BJ (cell line): ENCODE measurements at regions of chr7 and their contacts with region 1.

Region 1: GRCh38 chr7:80134536-80135320 is at the start of gene GNAI1:
- DNase-seq: no peak
- H3K4me3 ChIP-seq: peak within 1 kb of the TSS; percentile 95
- H3K27me3 ChIP-seq: no peaks in the 10 kb centered on the region
- CTCF ChIP-seq: peak; percentile 44
- polyA plus RNA-seq, gene GNAI1: 19.4 and 51.6 TPM in 2 replicates

Region 2: DNA sequence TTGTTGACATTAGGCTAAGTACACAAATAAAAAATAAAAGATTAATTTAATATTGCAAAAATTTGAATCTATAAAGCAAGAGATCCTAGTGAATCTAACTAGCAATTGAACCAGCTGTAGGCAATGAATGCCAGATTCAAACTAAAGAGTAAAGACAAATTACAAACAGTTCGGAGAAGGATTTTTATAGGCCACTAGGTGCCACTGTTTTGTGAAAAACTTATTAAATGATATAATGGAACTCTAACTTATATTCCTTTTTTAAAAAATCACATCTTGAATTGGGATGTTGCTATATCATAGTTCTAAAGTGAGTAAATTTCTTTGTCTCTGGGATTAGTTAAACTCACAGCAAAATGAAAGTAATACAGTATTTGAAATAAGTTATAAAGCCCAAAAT is 39.2 kb before region 1 on chr7:
- CTCF ChIA-PET with region 1: interaction called, 15 read pairs
- POLR2A ChIA-PET with region 1: no interaction called
- DNase-seq: no peak
- H3K4me3 ChIP-seq: no peak overlapping the region
- H3K27me3 ChIP-seq: no peaks in the 10 kb centered on the region
- CTCF ChIP-seq: peak; percentile 34; the same call in 1 of the 2 replicates

Region 3: DNA sequence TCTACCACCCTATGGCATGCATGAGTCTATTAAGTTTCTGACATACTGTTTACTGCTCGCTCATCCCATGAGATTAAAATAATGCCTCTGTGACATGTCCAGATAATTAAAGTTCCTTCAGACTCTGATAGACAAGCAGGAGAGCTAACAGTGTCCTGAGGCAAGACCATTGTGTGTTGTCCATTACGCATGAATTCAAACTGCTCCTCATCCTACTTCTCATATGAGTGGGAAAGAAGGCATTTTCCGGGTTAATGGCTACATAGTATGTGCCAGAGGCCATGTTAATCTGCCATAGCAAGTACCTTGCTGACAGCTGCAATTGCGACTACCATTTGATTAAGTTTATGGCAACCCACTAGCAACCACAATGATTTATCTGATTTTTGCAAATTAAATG is 113.2 kb after region 1 on chr7:
- CTCF ChIA-PET with region 1: interaction called, 4 read pairs
- POLR2A ChIA-PET with region 1: interaction called, 18 read pairs
- DNase-seq: no peak
- H3K4me3 ChIP-seq: no peak overlapping the region
- H3K27me3 ChIP-seq: no peaks in the 10 kb centered on the region
- CTCF ChIP-seq: no peak